Activated CD8-positive, alpha-beta memory T cell treated with anti-CD3 and anti-CD28 coated beads, Interleukin-2, amount 10 ng/mL, durations not matched to agents 7 days and 5 days (primary cell): ENCODE measurements at regions of chr17 and their contacts with region 1.

Region 1: GRCh38 chr17:7687908-7688807 is at the start of gene WRAP53:
- DNase-seq: peak; percentile 98
- ATAC-seq: peak; percentile 82
- H3K4me3 Mint-ChIP-seq: peak within 1 kb of the TSS; percentile 96
- H3K27ac Mint-ChIP-seq: peak within 1 kb of the TSS; percentile 97
- H3K4me1 Mint-ChIP-seq: peaks cover 33% of the 10 kb centered on the region
- H3K27me3 Mint-ChIP-seq: no peaks in the 10 kb centered on the region
- total RNA-seq, gene WRAP53: 28.0 to 29.0 TPM

Region 2: GRCh38 chr17:7614422-7615264 is 73.5 kb before region 1 on chr17 and contains the start of gene FXR2:
- CTCF ChIA-PET with region 1: interaction called, 58 read pairs
- DNase-seq: peak; percentile 100
- ATAC-seq: peak; percentile 95
- H3K4me3 Mint-ChIP-seq: peak within 1 kb of the TSS; percentile 77
- H3K27ac Mint-ChIP-seq: peak within 1 kb of the TSS; percentile 87
- H3K4me1 Mint-ChIP-seq: peaks cover 30% of the 10 kb centered on the region
- H3K27me3 Mint-ChIP-seq: no peaks in the 10 kb centered on the region
- total RNA-seq, gene FXR2: 30.7 to 40.5 TPM

Region 3: GRCh38 chr17:7632492-7632894 is 55.7 kb before region 1 on chr17:
- CTCF ChIA-PET with region 1: interaction called, 77 read pairs
- DNase-seq: peak; percentile 59
- ATAC-seq: peak; percentile 28
- H3K4me3 Mint-ChIP-seq: no peak overlapping the region
- H3K27ac Mint-ChIP-seq: no peak overlapping the region
- H3K4me1 Mint-ChIP-seq: peaks cover 3% of the 10 kb centered on the region
- H3K27me3 Mint-ChIP-seq: no peaks in the 10 kb centered on the region

Region 4: GRCh38 chr17:7703584-7704479 is 15.7 kb after region 1 on chr17:
- CTCF ChIA-PET with region 1: interaction called, 12 read pairs
- DNase-seq: no peak
- ATAC-seq: no peak
- H3K4me3 Mint-ChIP-seq: no peak overlapping the region
- H3K27ac Mint-ChIP-seq: no peak overlapping the region
- H3K4me1 Mint-ChIP-seq: peaks cover 10% of the 10 kb centered on the region
- H3K27me3 Mint-ChIP-seq: peaks cover 42% of the 10 kb centered on the region

Region 5: DNA sequence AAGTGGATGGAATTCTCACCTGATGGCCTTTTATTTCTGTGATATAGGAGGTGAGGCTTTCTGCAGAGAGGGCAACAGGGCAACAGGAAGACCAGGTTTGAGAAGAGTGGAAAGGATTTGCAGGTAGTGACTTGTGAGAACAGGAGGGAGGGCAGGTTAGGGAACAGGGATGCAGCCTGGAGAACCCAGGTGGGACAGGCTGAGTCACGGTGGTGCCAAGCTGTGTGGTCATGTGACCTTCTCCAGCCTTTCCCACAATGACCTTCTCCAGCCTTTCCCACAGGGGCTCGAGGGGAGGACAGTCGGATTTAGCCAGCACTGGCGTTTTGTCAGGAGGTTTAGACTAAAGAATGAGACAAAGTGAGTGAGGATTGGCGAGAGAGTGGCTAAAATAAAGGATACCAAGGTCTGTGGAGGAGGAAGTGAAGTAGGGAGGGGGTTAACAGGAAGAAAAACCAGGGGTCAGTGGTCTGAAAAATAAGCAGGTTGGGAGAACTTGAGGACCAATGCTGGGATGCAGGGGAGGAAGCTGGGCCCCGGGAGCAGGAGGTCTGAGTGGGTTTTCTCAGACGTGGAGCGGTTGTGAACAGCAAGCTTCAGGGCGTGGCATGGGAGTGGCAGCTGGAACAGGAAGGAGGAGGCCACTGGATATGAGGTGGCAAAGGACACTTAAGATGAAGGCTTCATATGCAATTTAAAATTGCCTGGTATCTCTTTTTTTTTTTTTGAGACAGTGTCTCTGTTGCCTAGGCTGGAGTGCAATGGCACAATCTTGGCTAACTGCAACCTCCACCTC is 67.1 kb after region 1 on chr17:
- CTCF ChIA-PET with region 1: no interaction called
- DNase-seq: no peak
- ATAC-seq: no peak
- H3K4me3 Mint-ChIP-seq: no peak overlapping the region
- H3K27ac Mint-ChIP-seq: no peak overlapping the region
- H3K4me1 Mint-ChIP-seq: peaks cover 4% of the 10 kb centered on the region
- H3K27me3 Mint-ChIP-seq: peaks cover 9% of the 10 kb centered on the region

Region 6: DNA sequence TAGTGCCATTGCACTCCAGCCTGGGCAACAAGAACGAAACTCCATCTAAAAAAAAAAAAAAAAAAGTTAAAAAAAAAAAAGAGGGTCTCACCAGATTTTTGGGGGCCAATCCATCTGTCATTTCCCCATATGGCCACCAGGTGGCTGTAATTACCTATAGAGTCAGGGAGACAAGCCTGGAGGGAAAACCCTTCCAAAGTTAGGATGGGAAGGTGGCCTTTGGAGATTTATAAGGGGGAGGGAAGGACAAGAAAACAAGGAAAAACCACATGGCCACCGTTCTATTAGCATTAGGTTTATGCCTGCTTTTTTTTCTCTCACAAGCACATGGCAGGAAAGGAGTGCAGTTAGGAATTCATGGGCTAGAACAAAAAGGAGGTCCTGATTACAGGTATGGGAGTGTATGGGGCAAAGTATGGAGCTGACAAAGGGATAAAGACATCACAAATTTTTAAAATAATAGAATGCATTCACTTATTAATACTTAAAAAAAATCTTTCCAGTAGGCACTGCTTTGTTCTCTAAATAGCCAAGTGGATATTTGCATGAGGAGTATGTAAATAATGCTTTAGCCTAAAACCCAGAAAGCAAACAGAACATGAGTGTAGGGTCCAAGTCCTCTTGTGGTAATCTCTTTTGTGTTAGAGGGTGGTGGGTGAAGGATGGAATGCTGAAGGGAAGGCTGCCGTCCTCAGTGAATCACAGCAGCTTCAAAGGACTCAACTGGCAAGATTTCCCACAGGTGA is 174.7 kb after region 1 on chr17:
- CTCF ChIA-PET with region 1: no interaction called
- DNase-seq: peak; percentile 70
- ATAC-seq: no peak
- H3K4me3 Mint-ChIP-seq: no peak overlapping the region
- H3K27ac Mint-ChIP-seq: no peak overlapping the region
- H3K4me1 Mint-ChIP-seq: peaks cover 11% of the 10 kb centered on the region
- H3K27me3 Mint-ChIP-seq: no peaks in the 10 kb centered on the region